CD8-positive, alpha-beta T cell (primary cell): ENCODE measurements at regions of chr2 and their contacts with region 1.

Region 1: GRCh38 chr2:12709207-12709522 is 7.6 kb upstream of the TRIB2 start:
- DNase-seq: peak in 4 of 9 experiments; percentile 22 to 84 (median 59)
- ATAC-seq: peak; percentile 90
- H3K4me3 ChIP-seq: no peak overlapping the region
- H3K4me3 Mint-ChIP-seq: peak overlapping the region; percentile 38
- H3K27ac ChIP-seq: peak overlapping the region in 1 of 2 experiments; percentile 53
- H3K27ac Mint-ChIP-seq: peak overlapping the region; percentile 82
- H3K4me1 ChIP-seq: peaks cover 44% of the 10 kb centered on the region
- H3K4me1 Mint-ChIP-seq: peaks cover 59% of the 10 kb centered on the region
- H3K27me3 ChIP-seq: no peaks in the 10 kb centered on the region
- H3K27me3 Mint-ChIP-seq: no peaks in the 10 kb centered on the region
- CTCF ChIP-seq: no peak

Region 2: GRCh38 chr2:12728221-12728777 is 19.1 kb after region 1 on chr2:
- CTCF ChIA-PET with region 1: interaction called, 32 read pairs
- POLR2A ChIA-PET with region 1: interaction called, 11 read pairs
- intact Hi-C with region 1: no loop called
- DNase-seq: peak; percentile 15 to 84 (median 64)
- ATAC-seq: peak; percentile 83
- H3K4me3 ChIP-seq: peak overlapping the region; percentile 6 to 28
- H3K4me3 Mint-ChIP-seq: peak overlapping the region; percentile 59
- H3K27ac ChIP-seq: peak overlapping the region; percentile 18 to 65
- H3K27ac Mint-ChIP-seq: peak overlapping the region; percentile 77
- H3K4me1 ChIP-seq: peaks cover 46% of the 10 kb centered on the region
- H3K4me1 Mint-ChIP-seq: peaks cover 87% of the 10 kb centered on the region
- H3K27me3 ChIP-seq: no peaks in the 10 kb centered on the region
- H3K27me3 Mint-ChIP-seq: no peaks in the 10 kb centered on the region
- CTCF ChIP-seq: no peak